Body of pancreas (tissue), 4 donors: ENCODE measurements at regions of chr4 and their contacts with region 1.

Region 1: GRCh38 chr4:41214136-41214824 is at the start of gene APBB2:
- DNase-seq: peak; percentile 95 to 97 (median 97)
- ATAC-seq: peak; percentile 91
- H3K4me3 ChIP-seq: peak within 1 kb of the TSS; percentile 76 to 96
- H3K27ac ChIP-seq: peak within 1 kb of the TSS; percentile 82 to 97 (median 88)
- H3K4me1 ChIP-seq: peaks cover 43% of the 10 kb centered on the region
- H3K27me3 ChIP-seq: no peaks in the 10 kb centered on the region
- CTCF ChIP-seq: peak; percentile 71 to 93 (median 77)
- POLR2A ChIP-seq: peak; percentile 86 to 92 (median 90)
- total RNA-seq, gene APBB2: 34.8 to 42.8 TPM

Region 2: DNA sequence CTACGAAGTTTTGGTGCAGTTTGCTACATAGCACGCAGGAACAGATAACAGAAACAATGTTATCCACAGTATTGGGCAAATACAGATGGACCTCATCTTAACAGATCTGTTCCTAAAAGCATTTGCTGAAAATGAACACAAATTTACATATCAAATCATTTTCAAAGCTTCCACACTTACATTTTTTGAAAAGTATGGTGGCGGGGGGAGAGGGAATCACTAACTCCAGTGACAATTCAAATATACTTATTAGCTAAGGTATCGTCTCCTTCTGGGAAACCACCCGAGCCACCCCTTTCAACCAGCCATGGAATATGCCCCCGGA is 289.5 kb before region 1 on chr4:
- intact Hi-C with region 1: loop called (anchors 5 kb)
- DNase-seq: no peak
- ATAC-seq: no peak
- H3K4me3 ChIP-seq: no peak overlapping the region
- H3K27ac ChIP-seq: no peak overlapping the region
- H3K4me1 ChIP-seq: peaks cover 15% of the 10 kb centered on the region
- H3K27me3 ChIP-seq: no peaks in the 10 kb centered on the region
- CTCF ChIP-seq: no peak
- POLR2A ChIP-seq: no peak

Region 3: GRCh38 chr4:40971338-40971737 is 242.9 kb before region 1 on chr4:
- intact Hi-C with region 1: loop called (anchors 5 kb)
- DNase-seq: no peak
- ATAC-seq: no peak
- H3K4me3 ChIP-seq: no peak overlapping the region
- H3K27ac ChIP-seq: no peak overlapping the region
- H3K4me1 ChIP-seq: no peaks in the 10 kb centered on the region
- H3K27me3 ChIP-seq: no peaks in the 10 kb centered on the region
- CTCF ChIP-seq: no peak
- POLR2A ChIP-seq: no peak

Region 4: GRCh38 chr4:41039317-41039716 is 175.0 kb before region 1 on chr4:
- intact Hi-C with region 1: no loop called
- DNase-seq: no peak
- ATAC-seq: no peak
- H3K4me3 ChIP-seq: no peak overlapping the region
- H3K27ac ChIP-seq: no peak overlapping the region
- H3K4me1 ChIP-seq: no peaks in the 10 kb centered on the region
- H3K27me3 ChIP-seq: no peaks in the 10 kb centered on the region
- CTCF ChIP-seq: no peak
- POLR2A ChIP-seq: no peak